ENCODE measurements at regions of chr10 and their contacts with region 1.

Region 1: DNA sequence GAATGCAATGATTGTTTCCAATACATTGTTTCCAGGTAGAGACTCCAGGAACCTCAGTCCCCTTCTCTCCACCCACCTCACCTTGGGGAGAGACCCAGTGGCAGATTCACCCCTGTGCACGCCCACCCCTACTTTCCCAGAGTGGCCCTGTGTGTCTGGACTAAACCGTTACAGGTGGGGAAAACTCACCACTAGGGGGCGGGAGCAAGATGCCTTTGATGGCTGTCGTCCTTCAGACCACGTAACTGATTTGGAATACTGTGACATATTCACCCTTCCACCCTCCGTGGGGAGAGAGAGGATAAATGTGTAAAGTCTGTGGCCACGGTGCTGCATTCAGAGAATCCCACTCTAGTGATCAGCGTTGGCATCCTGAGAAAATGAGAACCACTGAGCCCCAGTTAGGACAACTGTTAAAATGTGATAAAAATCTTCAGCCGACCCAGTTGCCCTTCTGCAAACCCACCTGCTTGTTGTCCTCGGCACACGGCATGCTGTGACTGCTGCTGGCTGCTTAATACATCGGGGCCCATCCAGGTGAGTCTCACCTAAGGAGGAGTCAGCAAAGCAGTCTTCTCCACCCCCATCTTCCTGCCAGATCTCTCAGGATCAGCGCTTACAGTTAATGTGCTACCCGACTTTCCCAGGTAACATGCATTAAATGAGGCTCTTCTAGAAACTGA is 41.5 kb upstream of the NMT2 start:
- DNase-seq: peak; percentile 86
- H3K4me3 Mint-ChIP-seq: no peak overlapping the region
- H3K27ac Mint-ChIP-seq: no peak overlapping the region
- H3K4me1 Mint-ChIP-seq: peaks cover 49% of the 10 kb centered on the region
- H3K27me3 Mint-ChIP-seq: no peaks in the 10 kb centered on the region

Region 2: GRCh38 chr10:15189133-15189885 is 20.7 kb before region 1 on chr10:
- CTCF ChIA-PET with region 1: interaction called, 4 read pairs
- POLR2A ChIA-PET with region 1: no interaction called
- intact Hi-C with region 1: loop called (anchors 2 kb)
- DNase-seq: no peak
- H3K4me3 Mint-ChIP-seq: no peak overlapping the region
- H3K27ac Mint-ChIP-seq: no peak overlapping the region
- H3K4me1 Mint-ChIP-seq: peaks cover 33% of the 10 kb centered on the region
- H3K27me3 Mint-ChIP-seq: no peaks in the 10 kb centered on the region

Region 3: GRCh38 chr10:15197276-15197675 is 12.7 kb before region 1 on chr10:
- CTCF ChIA-PET with region 1: no interaction called
- POLR2A ChIA-PET with region 1: no interaction called
- intact Hi-C with region 1: loop called (anchors 1 kb)
- DNase-seq: no peak
- H3K4me3 Mint-ChIP-seq: peak overlapping the region; percentile 15
- H3K27ac Mint-ChIP-seq: peak overlapping the region; percentile 69
- H3K4me1 Mint-ChIP-seq: peaks cover 37% of the 10 kb centered on the region
- H3K27me3 Mint-ChIP-seq: no peaks in the 10 kb centered on the region

Region 4: GRCh38 chr10:15245530-15245929 is 35.6 kb after region 1 on chr10:
- CTCF ChIA-PET with region 1: interaction called, 3 read pairs
- POLR2A ChIA-PET with region 1: no interaction called
- intact Hi-C with region 1: loop called (anchors 2 kb)
- DNase-seq: peak; percentile 22
- H3K4me3 Mint-ChIP-seq: no peak overlapping the region
- H3K27ac Mint-ChIP-seq: no peak overlapping the region
- H3K4me1 Mint-ChIP-seq: peaks cover 3% of the 10 kb centered on the region
- H3K27me3 Mint-ChIP-seq: no peaks in the 10 kb centered on the region

Region 5: GRCh38 chr10:15370856-15371701 is 161.1 kb after region 1 on chr10 and contains the start of gene FAM171A1:
- CTCF ChIA-PET with region 1: interaction called, 3 read pairs
- POLR2A ChIA-PET with region 1: no interaction called
- intact Hi-C with region 1: loop called (anchors 1 kb)
- DNase-seq: peak; percentile 76
- H3K4me3 Mint-ChIP-seq: peak within 1 kb of the TSS; percentile 70
- H3K27ac Mint-ChIP-seq: no peak within 1 kb of the TSS
- H3K4me1 Mint-ChIP-seq: peaks cover 9% of the 10 kb centered on the region
- H3K27me3 Mint-ChIP-seq: peaks cover 16% of the 10 kb centered on the region
- total RNA-seq, gene FAM171A1: 3.3 to 4.0 TPM